Endothelial cell of umbilical vein (primary cell): ENCODE measurements at regions of chr11 and their contacts with region 1.

Region 1: GRCh38 chr11:68121067-68121899 is at the start of gene CHKA:
- DNase-seq: peak; percentile 93
- H3K4me3 ChIP-seq: peak within 1 kb of the TSS; percentile 27 to 73 (median 56)
- H3K27ac ChIP-seq: peak within 1 kb of the TSS; percentile 85
- H3K4me1 ChIP-seq: peaks cover 8% of the 10 kb centered on the region
- H3K27me3 ChIP-seq: no peaks in the 10 kb centered on the region
- CTCF ChIP-seq: no peak
- POLR2A ChIP-seq: peak; percentile 33
- total RNA-seq, gene CHKA: 21.3 and 25.1 TPM in 2 replicates

Region 2: DNA sequence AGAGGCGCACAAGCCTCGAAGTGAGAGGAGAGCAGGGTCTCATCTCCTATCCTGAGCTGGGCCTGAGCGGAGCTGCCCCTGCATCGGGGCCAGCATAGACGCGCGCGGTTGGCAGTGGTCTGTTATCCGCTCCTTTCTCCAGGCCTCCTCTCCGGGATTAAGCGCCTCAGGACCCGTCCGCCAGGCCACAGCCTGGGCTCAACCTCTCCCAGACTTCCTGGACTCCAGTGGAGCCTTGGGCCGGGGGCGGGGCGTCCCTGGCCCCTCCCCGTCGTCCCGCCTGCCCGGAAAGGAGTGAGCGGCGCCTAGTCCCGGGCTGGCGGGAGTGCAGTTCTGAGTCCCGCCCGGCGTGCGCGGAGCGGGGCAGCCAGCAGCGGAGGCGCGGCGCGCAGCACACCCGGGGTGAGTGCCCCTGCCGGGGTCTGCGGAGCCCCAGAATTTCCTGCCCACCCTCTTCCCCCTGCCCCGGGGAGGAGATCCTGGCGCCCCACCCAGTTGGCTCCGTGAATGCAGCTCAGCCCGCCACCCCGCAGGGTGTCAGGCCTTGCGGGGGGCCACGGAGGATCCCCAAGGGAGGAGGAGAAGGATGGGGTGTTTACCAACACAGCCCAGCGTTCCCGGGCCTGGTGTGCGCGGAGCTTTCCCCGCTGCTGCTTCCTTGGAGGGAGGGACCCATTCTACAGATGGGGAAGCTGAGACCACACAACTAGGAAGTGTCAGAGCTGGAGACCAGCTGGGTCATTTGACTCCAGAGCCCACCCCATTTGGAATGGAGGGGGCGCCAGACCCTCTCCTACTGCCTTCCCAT is 82.4 kb before region 1 on chr11 and contains the start of gene TCIRG1:
- CTCF ChIA-PET with region 1: interaction called, 3 read pairs
- POLR2A ChIA-PET with region 1: no interaction called
- dilution Hi-C with region 1: no loop called
- intact Hi-C with region 1: loop called (anchors 1 kb)
- DNase-seq: peak; percentile 88
- H3K4me3 ChIP-seq: peak within 1 kb of the TSS; percentile 47 to 58 (median 58)
- H3K27ac ChIP-seq: peak within 1 kb of the TSS; percentile 51
- H3K4me1 ChIP-seq: peaks cover 20% of the 10 kb centered on the region
- H3K27me3 ChIP-seq: no peaks in the 10 kb centered on the region
- CTCF ChIP-seq: no peak
- POLR2A ChIP-seq: peak; percentile 98
- total RNA-seq, gene TCIRG1: 124 and 134 TPM in 2 replicates

Region 3: DNA sequence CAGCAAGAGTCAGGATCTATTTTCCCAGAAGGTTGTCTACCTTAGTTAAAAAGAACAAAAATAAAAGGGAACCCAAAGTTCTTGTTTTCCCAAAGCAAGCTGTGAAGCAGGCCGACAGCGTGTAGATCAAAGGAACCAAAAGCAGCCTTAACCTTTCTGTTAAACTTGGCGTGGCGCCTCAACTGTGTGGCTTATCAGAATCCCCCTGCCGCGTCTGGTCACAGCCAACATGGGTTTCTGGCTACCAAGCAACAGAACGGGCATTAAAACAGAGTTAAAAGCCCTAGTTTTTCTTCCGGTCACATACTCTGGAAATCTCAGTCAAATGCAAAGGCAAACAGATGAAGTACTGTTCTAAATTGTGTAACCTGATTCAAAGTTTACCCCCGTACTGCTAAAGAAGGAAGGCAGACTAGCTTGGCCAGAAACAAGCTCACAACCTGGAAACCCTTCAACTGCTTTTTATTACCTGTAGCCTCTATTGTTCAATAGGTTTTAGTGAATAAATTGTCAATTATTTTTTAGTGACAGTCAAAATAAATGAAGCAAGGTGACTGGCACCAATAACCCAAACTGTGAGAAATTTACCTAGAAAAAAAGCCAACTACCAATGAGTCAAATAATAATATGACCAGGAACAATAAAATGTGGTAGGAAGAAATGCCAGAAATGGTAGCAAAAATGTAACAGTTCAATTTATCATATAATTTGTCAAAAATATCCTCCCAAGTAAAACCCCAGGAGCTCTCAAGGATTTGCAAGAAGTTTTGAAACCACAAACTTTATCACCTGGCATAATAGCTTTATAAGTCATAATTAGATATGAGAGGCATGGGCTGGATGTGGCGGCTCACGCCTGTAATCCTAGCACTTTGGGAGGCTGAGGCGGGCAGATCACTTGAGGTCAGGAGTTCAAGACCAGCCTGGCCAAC is 21.5 kb before region 1 on chr11:
- CTCF ChIA-PET with region 1: interaction called, 3 read pairs
- POLR2A ChIA-PET with region 1: no interaction called
- dilution Hi-C with region 1: no loop called
- intact Hi-C with region 1: loop called (anchors 2 kb)
- DNase-seq: peak; percentile 92
- H3K4me3 ChIP-seq: peak overlapping the region in 1 of 3 experiments; percentile 48
- H3K27ac ChIP-seq: peak overlapping the region; percentile 70
- H3K4me1 ChIP-seq: peaks cover 22% of the 10 kb centered on the region
- H3K27me3 ChIP-seq: no peaks in the 10 kb centered on the region
- CTCF ChIP-seq: no peak
- POLR2A ChIP-seq: no peak

Region 4: GRCh38 chr11:68199295-68199987 is 78.2 kb after region 1 on chr11:
- CTCF ChIA-PET with region 1: no interaction called
- POLR2A ChIA-PET with region 1: no interaction called
- dilution Hi-C with region 1: no loop called
- intact Hi-C with region 1: no loop called
- DNase-seq: no peak
- H3K4me3 ChIP-seq: no peak overlapping the region
- H3K27ac ChIP-seq: no peak overlapping the region
- H3K4me1 ChIP-seq: no peaks in the 10 kb centered on the region
- H3K27me3 ChIP-seq: no peaks in the 10 kb centered on the region
- CTCF ChIP-seq: no peak
- POLR2A ChIP-seq: no peak

Region 5: DNA sequence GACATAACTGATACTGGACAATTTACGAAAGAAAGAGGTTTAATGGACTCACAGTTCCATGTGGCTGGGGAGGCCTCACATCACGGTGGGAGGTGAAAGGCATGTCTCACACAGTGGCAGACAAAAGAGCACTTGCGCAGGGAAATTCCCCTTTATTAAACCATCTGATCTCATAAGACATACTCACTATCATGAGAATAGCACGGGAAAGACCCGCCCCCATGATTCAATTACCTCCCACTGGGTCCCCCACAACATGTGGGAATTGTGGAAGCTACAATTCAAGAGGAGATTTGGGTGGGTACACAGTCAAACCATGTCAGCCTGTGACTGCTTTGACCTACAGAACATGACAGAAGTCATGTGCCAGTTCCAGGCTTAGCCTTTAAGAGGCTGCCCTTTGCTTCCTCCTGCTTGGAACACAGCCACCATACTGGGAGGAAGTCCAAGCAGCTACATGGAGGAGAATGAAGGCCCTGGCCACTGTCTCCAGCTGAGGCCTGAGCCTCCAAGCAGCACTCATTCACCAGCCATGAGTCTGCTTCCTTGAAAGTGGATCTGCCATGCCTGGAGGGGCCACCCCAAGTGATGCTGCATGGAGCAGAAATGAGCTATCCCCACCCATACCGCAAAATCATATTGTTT is 552.1 kb after region 1 on chr11:
- CTCF ChIA-PET with region 1: no interaction called
- POLR2A ChIA-PET with region 1: no interaction called
- dilution Hi-C with region 1: no loop called
- intact Hi-C with region 1: no loop called
- DNase-seq: no peak
- H3K4me3 ChIP-seq: no peak overlapping the region
- H3K27ac ChIP-seq: no peak overlapping the region
- H3K4me1 ChIP-seq: peaks cover 7% of the 10 kb centered on the region
- H3K27me3 ChIP-seq: no peaks in the 10 kb centered on the region
- CTCF ChIP-seq: no peak
- POLR2A ChIP-seq: no peak